ENCODE measurements at regions of chr7 and their contacts with region 1.

Region 1: DNA sequence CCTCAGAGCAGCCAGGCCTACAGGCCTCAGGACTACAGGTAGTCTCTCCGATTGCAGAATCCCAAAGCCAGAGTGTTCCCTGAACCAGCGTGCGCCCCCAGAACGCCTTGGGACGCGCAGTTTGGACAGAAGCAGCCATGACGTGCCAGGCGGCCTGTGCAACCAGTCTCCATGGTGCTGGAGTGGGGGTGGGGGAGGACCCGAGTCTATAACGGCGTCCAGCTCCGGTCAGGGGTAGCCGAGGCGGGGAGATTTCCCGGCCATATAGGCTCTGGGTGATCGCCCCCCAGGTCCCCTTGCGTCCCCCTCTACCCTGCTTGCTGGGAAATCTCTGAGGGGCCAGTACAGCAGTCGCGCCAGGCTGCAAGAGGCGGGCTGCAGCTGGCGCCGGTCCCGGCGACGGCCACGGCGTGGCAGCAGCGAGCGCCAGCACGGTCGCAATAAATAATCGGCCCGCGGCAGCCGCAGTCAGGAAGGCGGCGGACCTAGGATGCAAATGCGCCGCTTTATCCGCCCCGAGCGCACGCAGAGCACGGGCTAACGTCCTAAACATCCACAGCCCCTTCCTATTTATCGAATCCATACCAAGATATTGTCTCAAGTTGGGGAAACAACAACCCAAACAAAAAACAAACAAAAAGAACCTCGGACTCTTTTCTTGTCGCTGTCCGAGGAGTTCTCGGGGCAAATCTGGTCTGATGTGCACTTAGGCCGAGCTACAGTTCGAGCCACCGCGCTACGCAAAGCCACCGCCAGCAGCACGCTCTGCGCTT is 1.6 kb downstream of the HOXA3 start:
- DNase-seq: peak; percentile 68 to 85
- ATAC-seq: peak; percentile 86 to 91 (median 87)
- H3K4me3 ChIP-seq: peak overlapping the region; percentile 30
- H3K4me3 Mint-ChIP-seq: peak overlapping the region; percentile 89
- H3K27ac ChIP-seq: peak overlapping the region; percentile 11
- H3K27ac Mint-ChIP-seq: peak overlapping the region; percentile 4 to 64
- H3K4me1 ChIP-seq: peaks cover 68% of the 10 kb centered on the region
- H3K4me1 Mint-ChIP-seq: peaks cover 34 to 44% of the 10 kb centered on the region in 2 donors
- H3K27me3 ChIP-seq: peaks cover 80% of the 10 kb centered on the region
- H3K27me3 Mint-ChIP-seq: peaks cover 72 to 74% of the 10 kb centered on the region in 2 donors
- CTCF ChIP-seq: peak; percentile 90

Region 2: GRCh38 chr7:25864943-25865751 is 1285.6 kb before region 1 on chr7:
- intact Hi-C with region 1: loop called (anchors 2 kb)
- DNase-seq: no peak
- ATAC-seq: no peak
- H3K4me3 ChIP-seq: no peak overlapping the region
- H3K4me3 Mint-ChIP-seq: no peak overlapping the region
- H3K27ac ChIP-seq: no peak overlapping the region
- H3K27ac Mint-ChIP-seq: no peak overlapping the region
- H3K4me1 ChIP-seq: peaks cover 11% of the 10 kb centered on the region
- H3K4me1 Mint-ChIP-seq: peaks cover 12 to 16% of the 10 kb centered on the region in 2 donors
- H3K27me3 ChIP-seq: peaks cover 90% of the 10 kb centered on the region
- H3K27me3 Mint-ChIP-seq: peaks cover 50 to 66% of the 10 kb centered on the region in 2 donors
- CTCF ChIP-seq: no peak

Region 3: DNA sequence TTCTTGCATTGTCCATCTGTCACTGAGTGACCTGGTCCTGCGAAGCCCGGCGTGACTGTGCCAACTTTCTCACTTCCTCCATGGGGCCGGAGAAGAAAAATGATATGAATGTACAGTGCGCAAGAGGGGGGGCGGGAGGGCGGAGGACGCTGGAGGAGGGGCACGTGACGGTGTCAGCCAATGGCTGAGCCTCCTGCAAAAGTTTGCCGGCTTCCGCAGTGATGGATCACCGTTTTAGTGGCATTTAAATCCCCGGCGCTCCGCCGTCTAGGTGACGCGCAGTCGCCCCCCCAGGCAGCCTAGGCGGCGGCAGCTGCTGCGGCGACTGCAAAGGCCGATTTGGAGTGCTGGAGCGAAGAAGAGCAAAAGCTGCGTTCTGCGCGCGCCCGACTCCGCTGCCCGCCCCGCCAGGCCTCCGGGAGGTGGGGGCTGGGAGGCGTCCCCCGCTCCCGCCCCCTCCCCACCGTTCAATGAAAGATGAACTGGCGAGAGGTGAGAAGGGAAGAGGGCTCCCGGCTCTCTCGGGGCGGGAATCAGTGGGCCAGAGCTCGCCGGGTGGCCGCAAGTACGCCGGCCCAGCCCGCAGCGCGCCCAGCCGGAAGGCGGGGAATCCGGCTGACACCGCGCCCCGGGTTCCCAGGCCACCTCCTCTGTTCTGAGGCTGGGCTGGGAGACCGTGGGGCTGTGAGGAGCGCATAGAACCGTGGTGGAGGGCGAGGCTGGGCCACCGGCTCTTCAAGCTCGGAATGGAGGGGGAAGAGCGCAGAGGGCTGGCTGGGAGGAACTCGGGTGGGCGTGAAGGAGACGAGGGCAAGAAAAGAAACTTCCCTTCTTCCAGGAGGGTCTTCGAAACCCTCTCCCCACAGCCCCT is 54.6 kb before region 1 on chr7 and contains the start of gene HOXA1:
- intact Hi-C with region 1: loop called (anchors 5 kb)
- DNase-seq: peak; percentile 74 to 87
- ATAC-seq: peak; percentile 84 to 92 (median 91)
- H3K4me3 ChIP-seq: peak within 1 kb of the TSS; percentile 86
- H3K4me3 Mint-ChIP-seq: peak within 1 kb of the TSS; percentile 91
- H3K27ac ChIP-seq: peak within 1 kb of the TSS; percentile 71
- H3K27ac Mint-ChIP-seq: peak within 1 kb of the TSS; percentile 71 to 88
- H3K4me1 ChIP-seq: peaks cover 30% of the 10 kb centered on the region
- H3K4me1 Mint-ChIP-seq: peaks cover 47 to 52% of the 10 kb centered on the region in 2 donors
- H3K27me3 ChIP-seq: peaks cover 11% of the 10 kb centered on the region
- H3K27me3 Mint-ChIP-seq: peaks cover 41 to 63% of the 10 kb centered on the region in 2 donors
- CTCF ChIP-seq: no peak
- total RNA-seq, gene HOXA1: 0.64 to 1.3 (median 1.1) TPM

Region 4: DNA sequence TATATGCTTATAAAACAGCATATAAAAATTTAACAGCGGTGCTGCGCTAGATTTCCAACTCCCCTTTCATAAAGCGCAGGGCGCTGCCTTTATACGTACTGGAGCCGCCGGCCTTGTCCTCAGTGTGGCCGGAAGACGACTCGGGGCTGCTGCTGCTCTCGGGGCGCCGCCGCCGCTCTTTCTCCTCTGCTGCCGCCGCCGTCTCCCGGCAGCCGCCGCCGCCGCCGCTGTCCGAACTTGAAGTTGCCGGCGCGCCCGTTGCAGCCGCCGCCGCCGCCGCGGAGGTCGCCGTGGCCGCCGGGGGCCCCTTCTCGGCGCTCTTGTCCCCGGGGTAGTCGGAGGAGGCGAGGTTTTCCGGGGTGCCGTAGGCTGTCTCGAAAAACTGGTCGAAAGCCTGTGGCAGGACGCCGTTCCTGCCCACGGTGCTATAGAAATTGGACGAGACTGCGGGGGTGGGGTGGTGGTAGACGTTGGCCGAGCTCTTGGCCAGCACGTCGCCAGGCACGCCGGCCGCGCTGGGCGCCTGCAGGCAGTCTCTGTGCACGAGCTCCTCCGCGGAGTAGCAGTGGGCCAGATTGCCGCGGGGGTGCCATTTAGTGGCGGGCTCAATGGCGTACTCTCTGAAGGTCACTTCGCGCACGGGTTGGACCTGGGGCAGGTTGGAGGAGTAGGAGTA is 33.7 kb after region 1 on chr7:
- intact Hi-C with region 1: loop called (anchors 5 kb)
- DNase-seq: peak; percentile 29 to 55
- ATAC-seq: peak; percentile 46 to 57 (median 46)
- H3K4me3 ChIP-seq: peak overlapping the region; percentile 30
- H3K4me3 Mint-ChIP-seq: peak overlapping the region; percentile 81
- H3K27ac ChIP-seq: no peak overlapping the region
- H3K27ac Mint-ChIP-seq: peak overlapping the region; percentile 31 to 58
- H3K4me1 ChIP-seq: peaks cover 61% of the 10 kb centered on the region
- H3K4me1 Mint-ChIP-seq: peaks cover 44 to 55% of the 10 kb centered on the region in 2 donors
- H3K27me3 ChIP-seq: peaks cover 89% of the 10 kb centered on the region
- H3K27me3 Mint-ChIP-seq: peaks cover 73 to 80% of the 10 kb centered on the region in 2 donors
- CTCF ChIP-seq: no peak

Region 5: DNA sequence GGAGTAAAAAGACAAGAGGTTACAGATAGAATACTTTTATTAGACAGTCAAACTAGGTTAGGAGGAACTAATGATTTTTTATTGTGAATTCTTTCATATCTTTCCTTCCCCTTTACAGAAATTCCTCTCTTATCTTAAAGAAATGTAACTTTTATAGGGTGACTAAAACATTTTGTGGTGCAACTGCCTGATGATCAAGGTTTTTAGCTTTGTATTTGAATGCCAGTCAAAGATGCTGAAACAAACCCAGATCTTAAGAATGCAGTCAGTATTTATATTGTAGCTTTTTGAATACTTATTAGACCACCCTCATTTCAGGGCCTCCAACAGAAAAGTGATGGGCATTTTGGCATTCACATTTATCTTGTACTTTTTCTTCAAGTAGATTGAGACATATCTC is 616.6 kb after region 1 on chr7:
- intact Hi-C with region 1: no loop called
- DNase-seq: no peak
- ATAC-seq: no peak
- H3K4me3 ChIP-seq: no peak overlapping the region
- H3K4me3 Mint-ChIP-seq: no peak overlapping the region
- H3K27ac ChIP-seq: no peak overlapping the region
- H3K27ac Mint-ChIP-seq: no peak overlapping the region
- H3K4me1 ChIP-seq: no peaks in the 10 kb centered on the region
- H3K4me1 Mint-ChIP-seq: peaks cover 0 to 20% of the 10 kb centered on the region in 2 donors
- H3K27me3 ChIP-seq: no peaks in the 10 kb centered on the region
- H3K27me3 Mint-ChIP-seq: no peaks in the 10 kb centered on the region
- CTCF ChIP-seq: no peak